GM12878 (cell line): ENCODE measurements at regions of chr9 and their contacts with region 1.

Region 1: DNA sequence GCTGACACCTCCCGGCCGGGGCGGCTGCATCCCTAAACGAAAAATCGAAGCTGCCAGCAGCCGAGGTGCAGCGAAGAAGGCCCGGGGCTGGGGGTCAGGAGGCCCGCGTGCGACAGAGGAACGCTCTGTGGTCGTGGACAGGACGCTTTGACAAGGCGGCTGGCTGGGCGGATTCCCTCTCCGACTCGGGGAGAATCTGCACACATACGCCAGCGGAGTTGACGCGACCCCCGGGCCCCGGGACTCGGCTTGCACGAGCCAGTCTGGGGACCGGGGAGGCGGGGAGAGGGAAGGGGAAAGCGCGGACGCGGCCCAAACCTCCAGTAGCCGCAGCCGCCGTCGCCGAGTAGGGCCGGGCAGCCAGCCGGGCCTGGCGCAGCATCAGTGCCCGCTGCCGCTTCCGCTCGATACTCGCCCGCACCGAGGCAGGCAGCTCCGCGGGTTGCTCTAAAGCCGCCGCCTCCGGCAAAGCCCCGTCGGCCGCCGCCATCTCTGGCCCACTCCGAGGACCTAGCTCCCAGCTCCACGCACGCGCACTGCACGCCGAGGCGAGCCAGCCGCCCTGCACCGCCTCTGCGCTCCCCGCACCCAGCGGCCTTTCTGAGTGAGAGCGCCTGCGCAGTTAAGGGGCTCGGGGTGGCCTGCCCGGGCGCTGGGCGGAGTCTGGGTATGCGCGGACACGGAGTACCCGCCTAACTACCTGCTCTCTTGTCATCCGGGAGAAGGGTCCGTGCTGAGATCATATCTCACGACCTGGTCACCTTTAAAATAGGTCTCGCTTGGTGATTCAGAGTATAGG is at the start of gene XPA:
- DNase-seq: peak; percentile 80
- ATAC-seq: peak; percentile 94
- H3K4me3 ChIP-seq: peak within 1 kb of the TSS; percentile 92
- H3K27ac ChIP-seq: peak within 1 kb of the TSS; percentile 85
- H3K4me1 ChIP-seq: peaks cover 18% of the 10 kb centered on the region
- H3K27me3 ChIP-seq: no peaks in the 10 kb centered on the region
- CTCF ChIP-seq: no peak
- EP300 ChIP-seq: no peak
- POLR2A ChIP-seq: peak; percentile 95
- RAD21 ChIP-seq: no peak
- polyA plus RNA-seq, gene XPA: 7.1 to 11.2 TPM

Region 2: DNA sequence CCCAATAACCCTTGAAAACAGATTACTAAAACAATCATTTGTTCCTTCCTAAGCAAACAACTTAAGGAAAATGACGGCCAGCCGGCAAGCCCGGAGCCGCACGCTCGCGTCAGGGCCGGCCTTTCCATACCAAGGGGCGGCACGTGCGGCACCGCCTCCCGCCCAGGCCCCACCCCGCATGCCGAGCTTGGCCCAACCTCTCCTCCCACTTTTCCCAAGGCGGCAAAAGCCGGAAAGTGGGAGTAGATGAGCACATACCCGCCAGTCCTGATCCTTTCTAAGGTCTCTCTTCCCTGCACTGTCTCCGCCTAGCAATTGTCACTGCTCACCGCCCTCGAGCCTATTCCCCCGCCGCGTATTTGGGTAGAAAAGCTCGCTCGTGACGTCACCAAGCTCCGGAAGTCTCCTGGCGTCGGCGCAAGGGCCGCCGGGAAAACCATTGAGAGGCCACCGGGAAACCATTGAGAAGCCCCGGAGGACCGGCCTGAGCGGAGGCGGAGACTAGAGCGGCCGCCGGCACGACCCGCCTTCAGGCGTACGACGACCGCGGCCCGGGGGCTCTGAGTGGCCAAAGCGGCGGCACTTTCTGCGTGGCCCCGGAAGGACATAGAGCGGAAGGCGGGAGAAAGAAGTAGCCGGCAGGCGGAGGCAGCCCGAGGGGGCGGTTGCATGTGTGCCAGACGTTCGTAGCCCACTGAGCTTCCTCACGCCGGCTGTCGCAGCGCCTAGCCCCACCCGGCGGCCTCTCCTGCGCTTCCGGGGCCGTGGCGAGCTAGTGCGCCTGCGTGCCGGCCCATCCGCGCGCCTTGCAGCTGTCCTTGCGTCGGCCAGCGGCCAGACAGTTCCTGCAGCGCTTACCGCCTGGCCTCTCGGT is 63.8 kb before region 1 on chr9 and contains the starts of genes NCBP1 and TSTD2:
- CTCF ChIA-PET with region 1: interaction called, 3 read pairs
- POLR2A ChIA-PET with region 1: interaction called, 22 read pairs
- RAD21 ChIA-PET with region 1: interaction called, 5 read pairs
- SMC1A ChIA-PET with region 1: interaction called, 6 read pairs
- in situ Hi-C with region 1: no loop called
- intact Hi-C with region 1: no loop called
- DNase-seq: peak; percentile 92
- ATAC-seq: peak; percentile 90
- H3K4me3 ChIP-seq: peak within 1 kb of the TSS; percentile 96
- H3K27ac ChIP-seq: peak within 1 kb of the TSS; percentile 93
- H3K4me1 ChIP-seq: peaks cover 5% of the 10 kb centered on the region
- H3K27me3 ChIP-seq: no peaks in the 10 kb centered on the region
- CTCF ChIP-seq: no peak
- EP300 ChIP-seq: peak in 1 of 2 experiments; percentile 25; a peak in 1 of 4 replicates
- POLR2A ChIP-seq: peak; percentile 95
- RAD21 ChIP-seq: no peak
- polyA plus RNA-seq, gene NCBP1: 14.7 to 21.5 TPM
- polyA plus RNA-seq, gene TSTD2: 5.0 to 5.3 TPM

Region 3: DNA sequence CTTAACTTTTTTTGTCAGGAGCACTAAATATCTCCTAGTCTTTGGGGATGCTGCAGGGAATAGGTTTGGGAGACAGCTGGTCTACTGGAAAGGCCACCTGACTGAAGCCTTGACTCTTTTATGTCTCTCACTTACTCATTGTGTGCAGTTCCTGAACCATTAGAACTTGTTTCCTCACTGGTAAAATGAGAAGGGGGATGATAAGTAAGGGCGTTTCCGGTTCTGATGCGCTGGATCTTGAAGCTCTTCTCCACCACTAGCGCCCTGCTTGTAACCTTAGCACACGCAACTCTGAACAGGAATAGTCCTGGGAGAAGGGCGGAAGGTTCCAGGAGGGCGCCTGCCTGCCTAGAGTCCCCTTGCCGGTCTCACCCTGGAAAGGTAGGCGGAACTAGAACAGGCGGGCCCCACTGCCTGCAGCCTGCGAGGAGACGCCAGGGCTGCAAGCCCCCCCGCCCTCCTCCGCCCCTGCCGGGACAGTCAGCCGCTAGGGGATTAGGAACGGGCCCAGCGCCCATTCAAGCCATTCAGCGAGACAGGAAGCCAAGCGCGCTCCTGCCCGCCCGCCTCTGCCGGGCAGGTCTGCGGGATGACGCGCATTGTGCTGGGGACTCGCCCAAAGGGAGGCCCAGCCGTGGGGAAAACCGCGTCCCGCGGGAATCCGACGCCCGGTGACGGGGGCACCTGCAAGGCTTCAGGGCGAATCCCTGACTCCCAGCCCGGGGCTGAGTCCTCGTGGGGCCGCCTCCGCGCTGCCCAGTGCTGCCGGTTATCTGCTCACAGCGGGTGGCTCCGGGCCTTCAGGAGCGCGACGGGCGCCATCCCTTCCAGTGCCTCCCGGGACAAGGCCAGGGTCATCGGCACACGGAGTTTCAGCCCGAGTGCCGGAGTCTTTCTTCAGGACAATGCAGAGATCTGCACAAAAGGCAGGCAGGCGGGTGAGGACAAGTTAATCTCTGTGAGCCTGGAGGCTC is 44.1 kb after region 1 on chr9:
- CTCF ChIA-PET with region 1: no interaction called
- POLR2A ChIA-PET with region 1: no interaction called
- RAD21 ChIA-PET with region 1: no interaction called
- SMC1A ChIA-PET with region 1: no interaction called
- in situ Hi-C with region 1: no loop called
- intact Hi-C with region 1: no loop called
- DNase-seq: no peak
- ATAC-seq: peak; percentile 79
- H3K4me3 ChIP-seq: no peak overlapping the region
- H3K27ac ChIP-seq: no peak overlapping the region
- H3K4me1 ChIP-seq: no peaks in the 10 kb centered on the region
- H3K27me3 ChIP-seq: peaks cover 0 to 3% of the 10 kb centered on the region in 2 experiments; a peak in 2 of 4 replicates
- CTCF ChIP-seq: no peak
- EP300 ChIP-seq: no peak
- POLR2A ChIP-seq: no peak
- RAD21 ChIP-seq: no peak